ENCODE measurements at regions of chr2 and their contacts with region 1.

Region 1: DNA sequence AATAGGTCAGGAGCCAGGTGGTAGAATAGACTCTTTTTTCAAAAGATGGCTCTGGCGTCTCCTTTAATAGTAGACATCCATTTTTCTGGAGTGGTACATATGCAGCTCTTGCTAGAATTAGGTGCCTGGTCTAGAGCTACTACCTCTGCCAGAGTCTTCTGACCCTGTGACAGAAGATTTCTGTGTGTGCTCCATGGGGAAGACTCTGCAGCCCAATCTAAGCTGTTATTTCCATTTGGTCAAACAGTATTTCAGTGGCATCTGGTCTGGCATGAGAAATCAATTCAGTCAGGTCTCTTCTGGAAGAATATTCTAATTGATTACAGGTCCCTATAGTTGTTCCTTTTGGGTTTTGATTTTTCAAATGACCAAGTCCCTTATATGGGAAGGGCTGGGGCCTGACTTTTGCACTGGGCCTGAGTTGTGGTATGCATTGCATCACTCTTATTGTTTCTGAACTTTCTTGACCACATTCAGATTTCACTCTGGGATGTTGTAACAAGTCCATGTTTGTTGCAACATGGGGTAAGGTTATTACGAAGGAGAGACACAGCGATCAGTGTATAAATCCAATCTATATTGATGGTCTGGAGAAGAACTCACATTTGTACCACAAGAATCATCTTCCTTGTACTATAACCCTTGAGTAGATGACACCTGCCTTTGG is 12.1 kb downstream of the MXD1 start:
- DNase-seq: no peak
- ATAC-seq: peak in 3 of 4 donors; percentile 24 to 70 (median 39)
- H3K4me3 ChIP-seq: no peak overlapping the region
- H3K27ac ChIP-seq: peak overlapping the region in 1 of 12 donors; percentile 6
- H3K4me1 ChIP-seq: peaks cover 0 to 50% (median 0%) of the 10 kb centered on the region in 12 donors
- H3K27me3 ChIP-seq: no peaks in the 10 kb centered on the region
- CTCF ChIP-seq: no peak
- POLR2A ChIP-seq: no peak

Region 2: GRCh38 chr2:69997015-69997830 is 70.2 kb after region 1 on chr2:
- intact Hi-C with region 1: no loop called
- DNase-seq: peak in 1 of 5 donors; percentile 47
- ATAC-seq: peak in 3 of 4 donors; percentile 20 to 42 (median 33)
- H3K4me3 ChIP-seq: no peak overlapping the region
- H3K27ac ChIP-seq: no peak overlapping the region
- H3K4me1 ChIP-seq: peaks cover 0 to 10% (median 0%) of the 10 kb centered on the region in 12 donors
- H3K27me3 ChIP-seq: no peaks in the 10 kb centered on the region
- CTCF ChIP-seq: no peak
- POLR2A ChIP-seq: no peak

Region 3: DNA sequence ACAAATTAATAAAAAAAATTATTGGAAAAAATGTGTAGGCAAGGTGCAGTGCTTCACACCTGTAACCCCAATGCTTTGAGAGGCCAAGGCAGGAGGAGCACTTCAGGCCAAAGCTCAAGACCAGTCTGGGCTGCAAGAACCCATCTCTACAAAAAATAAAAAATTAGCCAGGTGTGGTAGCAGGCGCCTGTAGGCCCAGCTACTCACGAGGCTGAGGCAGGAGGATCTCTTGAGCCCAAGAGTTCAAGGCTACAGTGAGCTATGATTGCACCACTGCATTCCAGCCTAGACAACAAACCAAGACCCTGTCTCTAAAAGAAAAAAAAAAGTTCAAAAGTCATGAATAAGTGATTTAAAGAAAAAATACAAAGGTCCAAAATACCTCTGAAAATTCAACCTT is 123.6 kb after region 1 on chr2:
- intact Hi-C with region 1: loop called in 1 of 10 experiments (anchors 10 kb)
- DNase-seq: no peak
- ATAC-seq: no peak
- H3K4me3 ChIP-seq: no peak overlapping the region
- H3K27ac ChIP-seq: no peak overlapping the region
- H3K4me1 ChIP-seq: peaks cover 0 to 21% (median 11%) of the 10 kb centered on the region in 12 donors
- H3K27me3 ChIP-seq: no peaks in the 10 kb centered on the region
- CTCF ChIP-seq: no peak
- POLR2A ChIP-seq: no peak

Region 4: GRCh38 chr2:70062268-70062667 is 135.3 kb after region 1 on chr2:
- intact Hi-C with region 1: loop called in 2 of 10 experiments (anchors 5 to 10 kb)
- DNase-seq: no peak
- ATAC-seq: no peak
- H3K4me3 ChIP-seq: no peak overlapping the region
- H3K27ac ChIP-seq: no peak overlapping the region
- H3K4me1 ChIP-seq: no peaks in the 10 kb centered on the region
- H3K27me3 ChIP-seq: no peaks in the 10 kb centered on the region
- CTCF ChIP-seq: no peak
- POLR2A ChIP-seq: no peak

Measured in heart left ventricle (tissue), 16 donors.